ENCODE measurements at regions of chr19 and their contacts with region 1.

Region 1: GRCh38 chr19:47112997-47113849 is at the start of gene ZC3H4:
- DNase-seq: peak; percentile 98
- ATAC-seq: peak; percentile 82
- H3K4me3 Mint-ChIP-seq: peak within 1 kb of the TSS; percentile 100
- H3K27ac Mint-ChIP-seq: peak within 1 kb of the TSS; percentile 100
- H3K4me1 Mint-ChIP-seq: peaks cover 38% of the 10 kb centered on the region
- H3K27me3 Mint-ChIP-seq: no peaks in the 10 kb centered on the region
- CTCF ChIP-seq: no peak
- total RNA-seq, gene ZC3H4: 83.8 and 89.1 TPM in 2 replicates

Region 2: GRCh38 chr19:46788262-46788967 is 324.8 kb before region 1 on chr19 and contains the start of gene SLC1A5:
- CTCF ChIA-PET with region 1: no interaction called
- POLR2A ChIA-PET with region 1: interaction called, 8 read pairs
- intact Hi-C with region 1: loop called (anchors 5 kb)
- DNase-seq: peak; percentile 96
- ATAC-seq: peak; percentile 83
- H3K4me3 Mint-ChIP-seq: peak within 1 kb of the TSS; percentile 95
- H3K27ac Mint-ChIP-seq: peak within 1 kb of the TSS; percentile 95
- H3K4me1 Mint-ChIP-seq: peaks cover 48% of the 10 kb centered on the region
- H3K27me3 Mint-ChIP-seq: no peaks in the 10 kb centered on the region
- CTCF ChIP-seq: no peak
- total RNA-seq, gene SLC1A5: 70.7 and 77.9 TPM in 2 replicates

Region 3: DNA sequence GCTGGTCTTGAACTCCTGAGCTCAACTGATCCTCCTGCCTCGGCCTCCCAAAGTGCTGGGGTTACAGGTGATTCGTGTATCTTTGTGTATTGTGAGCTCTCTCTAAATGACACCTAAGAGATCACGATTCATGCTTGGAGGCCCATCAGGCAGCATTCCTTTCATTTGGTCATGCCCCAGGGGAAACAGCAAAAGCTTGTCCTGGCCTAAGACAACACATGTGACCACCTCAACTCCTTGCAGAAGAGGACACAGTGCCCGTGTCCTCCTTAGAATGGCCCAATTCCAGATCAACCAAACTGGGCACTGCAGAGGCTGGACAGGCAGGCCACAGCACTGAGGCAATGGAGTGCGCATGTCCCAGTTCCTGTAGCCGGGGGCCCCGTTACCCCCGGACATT is 32.1 kb before region 1 on chr19:
- CTCF ChIA-PET with region 1: interaction called, 7 read pairs
- POLR2A ChIA-PET with region 1: interaction called, 27 read pairs
- intact Hi-C with region 1: loop called (anchors 5 kb)
- DNase-seq: no peak
- ATAC-seq: no peak
- H3K4me3 Mint-ChIP-seq: no peak overlapping the region
- H3K27ac Mint-ChIP-seq: no peak overlapping the region
- H3K4me1 Mint-ChIP-seq: peaks cover 10% of the 10 kb centered on the region
- H3K27me3 Mint-ChIP-seq: no peaks in the 10 kb centered on the region
- CTCF ChIP-seq: no peak

Region 4: GRCh38 chr19:47152224-47153017 is 39.2 kb after region 1 on chr19:
- CTCF ChIA-PET with region 1: interaction called, 3 read pairs
- POLR2A ChIA-PET with region 1: interaction called, 13 read pairs
- intact Hi-C with region 1: no loop called
- DNase-seq: no peak
- ATAC-seq: no peak
- H3K4me3 Mint-ChIP-seq: no peak overlapping the region
- H3K27ac Mint-ChIP-seq: no peak overlapping the region
- H3K4me1 Mint-ChIP-seq: peaks cover 19% of the 10 kb centered on the region
- H3K27me3 Mint-ChIP-seq: no peaks in the 10 kb centered on the region
- CTCF ChIP-seq: no peak

Region 5: GRCh38 chr19:47243776-47244547 is 130.7 kb after region 1 on chr19:
- CTCF ChIA-PET with region 1: interaction called, 5 read pairs
- POLR2A ChIA-PET with region 1: interaction called, 18 read pairs
- intact Hi-C with region 1: loop called (anchors 1 kb)
- DNase-seq: peak; percentile 92
- ATAC-seq: peak; percentile 70
- H3K4me3 Mint-ChIP-seq: peak overlapping the region; percentile 86
- H3K27ac Mint-ChIP-seq: peak overlapping the region; percentile 90
- H3K4me1 Mint-ChIP-seq: peaks cover 29% of the 10 kb centered on the region
- H3K27me3 Mint-ChIP-seq: peaks cover 7% of the 10 kb centered on the region
- CTCF ChIP-seq: peak; percentile 47

Region 6: DNA sequence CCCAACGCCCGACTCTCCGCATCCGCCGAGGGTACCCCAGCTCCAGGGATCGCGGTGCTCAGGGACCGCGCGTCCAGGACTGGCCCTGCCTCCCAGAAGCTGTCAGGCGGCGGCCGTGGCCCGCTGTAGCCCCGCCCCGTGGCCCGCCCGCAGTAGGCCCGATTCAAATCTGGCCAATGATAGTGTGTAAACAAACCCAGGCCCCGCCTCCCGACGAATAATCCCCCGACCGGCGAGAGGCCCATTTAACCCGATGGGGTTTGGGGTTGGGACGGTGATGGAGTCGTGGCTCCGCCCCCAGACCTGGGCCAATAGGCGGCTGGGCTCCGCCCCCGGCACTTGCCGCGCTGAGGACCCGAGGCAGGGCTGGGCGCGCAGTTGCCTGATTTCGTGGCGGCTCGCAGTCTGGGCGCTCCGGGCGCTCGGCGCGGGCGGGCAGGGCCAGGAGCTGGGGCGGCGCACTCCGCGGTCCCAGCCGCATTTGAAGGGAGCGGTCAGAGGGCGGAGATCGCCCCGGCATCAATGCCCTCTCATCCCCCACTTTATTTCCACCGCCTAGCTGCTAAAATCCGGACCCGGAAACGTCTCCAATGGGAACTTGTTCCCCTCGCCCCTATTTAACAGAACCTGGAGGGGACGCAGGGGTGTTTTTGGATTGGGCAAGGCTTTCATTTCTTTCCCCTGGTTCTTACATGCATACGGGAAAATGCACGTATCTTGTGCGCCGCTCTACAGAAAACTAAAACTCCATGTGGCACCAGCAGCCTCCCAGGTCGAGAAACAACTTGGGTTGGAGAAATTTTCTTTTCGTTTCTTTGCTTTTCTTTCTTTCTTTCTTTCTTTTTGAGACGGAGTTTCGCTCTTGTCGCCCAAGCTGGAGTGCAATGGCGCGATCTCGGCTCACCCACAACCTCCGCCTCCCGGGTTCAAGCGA is 487.3 kb after region 1 on chr19:
- CTCF ChIA-PET with region 1: no interaction called
- POLR2A ChIA-PET with region 1: no interaction called
- intact Hi-C with region 1: loop called (anchors 2 kb)
- DNase-seq: peak; percentile 92
- ATAC-seq: peak; percentile 97
- H3K4me3 Mint-ChIP-seq: peak overlapping the region; percentile 84
- H3K27ac Mint-ChIP-seq: peak overlapping the region; percentile 76
- H3K4me1 Mint-ChIP-seq: peaks cover 10% of the 10 kb centered on the region
- H3K27me3 Mint-ChIP-seq: peaks cover 9% of the 10 kb centered on the region
- CTCF ChIP-seq: no peak